ENCODE measurements at regions of chr1 and their contacts with region 1.

Region 1: DNA sequence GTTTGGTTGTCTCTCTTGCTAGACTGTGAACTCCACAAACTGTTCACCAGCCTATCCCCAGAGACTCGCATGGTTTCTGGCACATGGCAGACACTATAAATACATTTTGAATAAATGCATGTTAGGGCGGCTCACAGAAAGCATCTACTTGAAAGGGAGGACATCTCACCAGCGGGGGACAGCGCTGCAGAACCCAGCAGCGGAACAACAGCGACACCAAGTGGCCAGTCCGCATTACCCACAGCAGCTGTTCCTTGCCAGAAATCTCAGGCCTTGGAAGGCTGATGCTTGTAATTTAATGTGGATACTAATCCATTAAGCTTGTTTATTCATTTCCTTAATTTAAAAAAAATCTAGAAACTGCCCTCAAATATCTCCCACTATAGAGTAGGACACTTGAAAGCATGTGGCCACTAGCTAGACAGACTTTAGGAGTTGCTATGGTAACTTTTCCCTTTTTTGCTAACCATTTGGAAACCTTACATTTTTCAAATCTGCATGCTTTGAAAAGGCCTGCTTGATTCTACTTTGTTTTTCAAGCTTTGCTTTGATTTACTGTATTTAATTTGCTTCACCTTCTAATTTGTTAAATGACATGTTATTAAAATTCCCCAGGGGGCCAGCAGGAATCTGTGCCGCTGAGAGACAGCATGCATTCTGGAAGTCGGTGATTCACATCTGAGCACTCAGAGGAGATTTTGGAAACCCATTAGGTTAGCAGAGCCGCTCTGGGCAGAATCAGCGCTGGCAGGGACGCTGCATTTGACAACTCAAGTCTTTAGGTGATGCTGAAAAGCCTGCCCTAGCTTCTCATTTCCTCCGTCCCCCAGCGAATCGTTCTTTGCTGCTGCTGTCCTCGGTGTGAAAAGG is 63.5 kb upstream of the SSX2IP start:
- DNase-seq: peak; percentile 69
- H3K4me3 ChIP-seq: no peak overlapping the region
- H3K27ac ChIP-seq: no peak overlapping the region
- H3K4me1 ChIP-seq: no peaks in the 10 kb centered on the region
- H3K27me3 ChIP-seq: no peaks in the 10 kb centered on the region
- CTCF ChIP-seq: peak; percentile 85 to 95 (median 94)
- POLR2A ChIP-seq: no peak

Region 2: GRCh38 chr1:84143796-84144565 is 609.8 kb before region 1 on chr1 and contains the start of gene PRKACB:
- intact Hi-C with region 1: loop called (anchors 10 kb)
- DNase-seq: no peak
- H3K4me3 ChIP-seq: no peak within 1 kb of the TSS
- H3K27ac ChIP-seq: peak within 1 kb of the TSS; percentile 13 to 49
- H3K4me1 ChIP-seq: no peaks in the 10 kb centered on the region
- H3K27me3 ChIP-seq: no peaks in the 10 kb centered on the region
- CTCF ChIP-seq: no peak
- POLR2A ChIP-seq: no peak
- total RNA-seq, gene PRKACB: 24.7 to 29.3 TPM

Region 3: DNA sequence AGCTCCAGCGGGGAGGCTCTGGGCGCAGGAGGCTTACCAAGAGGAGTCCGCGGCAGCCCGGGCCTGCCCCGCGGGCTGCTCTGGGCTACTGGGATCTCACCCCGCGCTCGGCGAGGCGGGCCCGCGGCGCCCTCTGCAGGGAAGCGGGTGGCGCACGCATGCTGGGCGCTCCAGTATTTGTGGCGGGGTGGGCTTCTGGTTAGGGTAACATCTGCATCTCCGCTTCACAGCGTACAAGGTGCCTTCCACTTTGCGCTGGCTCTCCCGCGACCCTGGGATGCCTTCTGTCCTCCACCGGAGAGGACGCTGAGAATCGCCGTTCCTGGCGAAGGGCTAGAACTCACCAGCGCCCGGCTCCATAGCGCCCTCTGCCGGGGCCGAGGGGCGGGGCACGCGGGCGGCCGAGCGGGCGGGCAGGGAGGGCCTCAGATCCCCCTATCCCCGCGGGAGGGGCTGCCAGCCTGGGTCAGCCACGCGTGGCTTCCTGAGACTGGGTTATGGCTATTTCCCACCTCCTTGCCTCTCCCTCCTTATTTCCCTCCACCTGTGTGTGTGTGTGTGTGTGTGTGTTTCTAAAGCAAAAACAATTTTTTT is 132.9 kb before region 1 on chr1:
- intact Hi-C with region 1: loop called (anchors 10 kb)
- DNase-seq: peak; percentile 41
- H3K4me3 ChIP-seq: peak overlapping the region; percentile 34 to 43
- H3K27ac ChIP-seq: peak overlapping the region; percentile 52 to 62
- H3K4me1 ChIP-seq: no peaks in the 10 kb centered on the region
- H3K27me3 ChIP-seq: no peaks in the 10 kb centered on the region
- CTCF ChIP-seq: peak; percentile 83 to 98 (median 94)
- POLR2A ChIP-seq: no peak

Region 4: GRCh38 chr1:84669831-84670230 is 83.9 kb before region 1 on chr1:
- intact Hi-C with region 1: loop called (anchors 2 kb)
- DNase-seq: no peak
- H3K4me3 ChIP-seq: no peak overlapping the region
- H3K27ac ChIP-seq: no peak overlapping the region
- H3K4me1 ChIP-seq: no peaks in the 10 kb centered on the region
- H3K27me3 ChIP-seq: no peaks in the 10 kb centered on the region
- CTCF ChIP-seq: no peak
- POLR2A ChIP-seq: no peak

Measured in prostate gland (tissue), 2 donors.